Activated B cell treated with CpG ODN at 0.5 μM for 24 hours (primary cell): ENCODE measurements at regions of chr1 and their contacts with region 1.

Region 1: GRCh38 chr1:26700711-26701110 is 4.9 kb downstream of the ARID1A start:
- DNase-seq: no peak
- ATAC-seq: no peak
- H3K4me3 Mint-ChIP-seq: no peak overlapping the region
- H3K27ac Mint-ChIP-seq: no peak overlapping the region
- H3K4me1 Mint-ChIP-seq: peaks cover 8% of the 10 kb centered on the region
- H3K27me3 Mint-ChIP-seq: no peaks in the 10 kb centered on the region
- CTCF ChIP-seq: no peak

Region 2: GRCh38 chr1:26321315-26322041 is 379.2 kb before region 1 on chr1:
- CTCF ChIA-PET with region 1: no interaction called
- POLR2A ChIA-PET with region 1: no interaction called
- intact Hi-C with region 1: no loop called
- DNase-seq: peak; percentile 91
- ATAC-seq: peak; percentile 71
- H3K4me3 Mint-ChIP-seq: peak overlapping the region; percentile 87
- H3K27ac Mint-ChIP-seq: peak overlapping the region; percentile 98
- H3K4me1 Mint-ChIP-seq: peaks cover 69% of the 10 kb centered on the region
- H3K27me3 Mint-ChIP-seq: no peaks in the 10 kb centered on the region
- CTCF ChIP-seq: peak; percentile 32

Region 3: DNA sequence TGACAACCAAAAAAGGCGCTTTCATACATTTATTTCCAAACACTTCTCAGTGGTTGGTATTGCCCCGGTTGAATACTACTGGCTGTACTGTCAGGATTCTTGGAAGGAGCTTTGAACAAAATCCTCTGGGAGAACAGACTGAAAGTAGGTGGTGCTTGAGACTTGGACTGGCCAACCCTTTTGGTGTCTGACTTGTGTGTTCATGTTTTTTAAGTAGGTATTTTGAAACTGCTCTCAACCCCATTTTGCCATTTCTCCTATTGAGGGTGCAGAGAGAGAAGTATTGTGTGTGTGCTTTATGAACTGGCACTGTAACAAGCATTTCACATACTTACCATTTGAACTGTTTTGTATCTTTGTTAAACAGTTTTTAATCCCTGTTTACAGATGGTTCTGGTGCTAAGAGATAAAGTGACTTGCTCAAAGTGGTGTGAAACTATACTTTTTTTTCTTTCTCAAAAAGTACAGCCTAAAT is 16.3 kb after region 1 on chr1:
- CTCF ChIA-PET with region 1: no interaction called
- POLR2A ChIA-PET with region 1: interaction called, 6 read pairs
- intact Hi-C with region 1: loop called (anchors 2 kb)
- DNase-seq: no peak
- ATAC-seq: no peak
- H3K4me3 Mint-ChIP-seq: no peak overlapping the region
- H3K27ac Mint-ChIP-seq: peak overlapping the region; percentile 41
- H3K4me1 Mint-ChIP-seq: peaks cover 91% of the 10 kb centered on the region
- H3K27me3 Mint-ChIP-seq: no peaks in the 10 kb centered on the region
- CTCF ChIP-seq: no peak

Region 4: GRCh38 chr1:26733982-26734381 is 33.3 kb after region 1 on chr1:
- CTCF ChIA-PET with region 1: no interaction called
- POLR2A ChIA-PET with region 1: no interaction called
- intact Hi-C with region 1: no loop called
- DNase-seq: no peak
- ATAC-seq: no peak
- H3K4me3 Mint-ChIP-seq: no peak overlapping the region
- H3K27ac Mint-ChIP-seq: peak overlapping the region; percentile 19
- H3K4me1 Mint-ChIP-seq: peaks cover 21% of the 10 kb centered on the region
- H3K27me3 Mint-ChIP-seq: no peaks in the 10 kb centered on the region
- CTCF ChIP-seq: no peak